ENCODE measurements at regions of chr21 and their contacts with region 1.

Region 1: GRCh38 chr21:39388038-39388810 is 39.3 kb upstream of the HMGN1 start:
- DNase-seq: peak; percentile 81 to 89 (median 86)
- H3K4me3 ChIP-seq: peak overlapping the region; percentile 52 to 89 (median 73)
- H3K4me3 Mint-ChIP-seq: peak overlapping the region; percentile 82 to 94
- H3K27ac ChIP-seq: peak overlapping the region; percentile 4 to 64
- H3K27ac Mint-ChIP-seq: peak overlapping the region; percentile 76 to 90 (median 86)
- H3K4me1 ChIP-seq: peaks cover 28% of the 10 kb centered on the region in 2 donors
- H3K4me1 Mint-ChIP-seq: peaks cover 20% of the 10 kb centered on the region
- H3K27me3 ChIP-seq: no peaks in the 10 kb centered on the region
- H3K27me3 Mint-ChIP-seq: peaks cover 0 to 3% (median 0%) of the 10 kb centered on the region in 3 donors
- CTCF ChIP-seq: peak; percentile 92

Region 2: DNA sequence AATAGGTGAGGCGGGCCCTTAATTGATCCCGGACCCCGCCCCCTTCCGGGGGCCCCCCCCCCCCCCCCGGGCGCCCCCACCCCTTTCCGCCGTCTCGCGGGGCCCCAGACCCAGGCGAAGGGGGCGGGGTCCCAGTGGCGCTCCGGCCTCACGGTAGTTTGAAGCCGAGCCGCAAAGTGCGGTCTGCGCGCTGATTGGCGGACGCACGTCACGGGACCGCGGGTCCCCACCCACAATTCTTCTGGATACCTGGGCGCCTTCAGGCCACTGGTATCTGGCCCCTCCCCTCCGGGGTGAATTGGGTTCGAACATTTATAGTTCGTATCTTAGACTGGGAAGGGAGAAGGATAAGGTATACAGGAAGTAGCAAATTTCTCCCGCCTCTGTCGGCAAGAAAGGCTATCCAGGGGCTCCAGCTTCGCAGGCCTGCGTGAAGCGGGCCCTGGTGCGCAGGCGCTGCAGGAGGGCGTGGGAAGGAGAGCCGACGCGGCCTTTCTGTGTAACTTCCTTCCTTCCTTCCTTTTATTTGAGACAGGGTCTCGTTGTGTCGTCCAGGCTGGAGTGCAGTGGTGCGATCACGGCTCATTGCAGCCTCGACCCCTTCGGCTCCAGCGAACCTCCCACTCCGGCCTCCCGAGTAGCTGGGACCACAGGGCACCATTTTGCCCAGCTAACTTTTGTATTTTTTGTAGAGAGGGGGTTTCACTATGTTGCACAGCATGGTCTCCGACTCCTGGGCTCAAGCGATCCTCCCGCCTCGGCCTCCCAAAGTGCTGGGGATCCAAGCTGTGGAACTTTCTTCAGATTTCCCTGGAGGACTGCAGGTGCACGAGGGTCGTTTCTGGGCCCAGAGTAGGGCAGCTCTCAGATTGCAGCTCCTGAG is 38.8 kb before region 1 on chr21:
- intact Hi-C with region 1: loop called (anchors 2 to 5 kb)
- DNase-seq: peak; percentile 90 to 92 (median 92)
- H3K4me3 ChIP-seq: peak overlapping the region; percentile 40 to 89 (median 72)
- H3K4me3 Mint-ChIP-seq: peak overlapping the region; percentile 93 to 97
- H3K27ac ChIP-seq: peak overlapping the region; percentile 88 to 92
- H3K27ac Mint-ChIP-seq: peak overlapping the region; percentile 95 to 98 (median 98)
- H3K4me1 ChIP-seq: peaks cover 22 to 36% of the 10 kb centered on the region in 2 donors
- H3K4me1 Mint-ChIP-seq: peaks cover 33% of the 10 kb centered on the region
- H3K27me3 ChIP-seq: no peaks in the 10 kb centered on the region
- H3K27me3 Mint-ChIP-seq: peaks cover 0 to 3% (median 0%) of the 10 kb centered on the region in 3 donors
- CTCF ChIP-seq: no peak

Region 3: GRCh38 chr21:39445321-39446269 is 57.4 kb after region 1 on chr21 and contains the start of gene LCA5L:
- intact Hi-C with region 1: loop called in 1 of 2 experiments (anchors 5 kb)
- DNase-seq: peak; percentile 90 to 93 (median 92)
- H3K4me3 ChIP-seq: peak within 1 kb of the TSS; percentile 56 to 89 (median 88)
- H3K4me3 Mint-ChIP-seq: peak within 1 kb of the TSS; percentile 87 to 96
- H3K27ac ChIP-seq: peak within 1 kb of the TSS; percentile 89 to 95
- H3K27ac Mint-ChIP-seq: peak within 1 kb of the TSS; percentile 93 to 98 (median 95)
- H3K4me1 ChIP-seq: peaks cover 15 to 18% of the 10 kb centered on the region in 2 donors
- H3K4me1 Mint-ChIP-seq: peaks cover 12% of the 10 kb centered on the region
- H3K27me3 ChIP-seq: peaks cover 0 to 6% of the 10 kb centered on the region in 2 donors
- H3K27me3 Mint-ChIP-seq: peaks cover 9 to 10% (median 9%) of the 10 kb centered on the region in 3 donors
- CTCF ChIP-seq: no peak
- polyA plus RNA-seq, gene LCA5L: 0.12 TPM in 1 of 3 donors, not detected in the others

Measured in CD14-positive monocyte (primary cell).